Sciatic nerve (tissue), 2 donors: ENCODE measurements at regions of chr1 and their contacts with region 1.

Region 1: DNA sequence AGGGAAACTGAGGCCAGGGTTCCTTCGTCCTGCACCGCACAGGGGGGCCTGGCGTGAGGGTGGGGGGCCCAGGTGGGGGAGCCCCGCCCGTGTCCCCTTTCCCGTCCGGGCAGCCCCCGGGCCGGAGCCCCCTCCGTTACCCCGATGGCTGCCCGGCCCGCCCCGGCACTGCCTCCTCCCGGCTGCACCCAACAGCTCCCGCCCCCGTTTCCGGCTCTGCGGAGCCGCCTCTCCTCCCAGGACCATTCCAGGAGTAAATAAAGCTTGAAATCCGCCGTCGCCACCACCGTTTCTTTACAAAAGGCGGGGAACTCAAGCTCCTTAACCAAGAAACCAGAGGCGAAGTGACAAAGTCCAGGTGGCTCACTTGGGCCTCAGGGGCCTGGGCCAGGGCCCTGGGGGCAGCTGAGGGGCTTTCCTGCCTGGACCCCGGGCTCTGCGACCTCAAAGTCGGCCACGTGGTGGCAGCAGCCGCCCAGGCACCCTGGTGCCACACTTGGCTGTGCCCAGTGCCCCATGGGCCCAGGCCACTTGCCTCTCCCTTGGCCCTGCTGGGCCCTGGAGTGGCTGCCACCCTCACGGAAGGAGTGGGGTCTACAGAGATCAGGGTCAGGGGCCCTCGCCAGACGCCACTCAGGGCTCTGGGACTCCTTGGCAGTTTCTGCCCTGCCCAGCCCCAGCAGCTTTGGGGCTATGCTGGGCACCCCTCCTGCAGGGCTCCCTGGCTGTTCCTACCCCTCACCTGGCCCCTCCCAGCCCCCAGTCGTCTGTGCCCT is 514 bp upstream of the FAAP20 start:
- DNase-seq: peak; percentile 94
- ATAC-seq: peak; percentile 80

Region 2: DNA sequence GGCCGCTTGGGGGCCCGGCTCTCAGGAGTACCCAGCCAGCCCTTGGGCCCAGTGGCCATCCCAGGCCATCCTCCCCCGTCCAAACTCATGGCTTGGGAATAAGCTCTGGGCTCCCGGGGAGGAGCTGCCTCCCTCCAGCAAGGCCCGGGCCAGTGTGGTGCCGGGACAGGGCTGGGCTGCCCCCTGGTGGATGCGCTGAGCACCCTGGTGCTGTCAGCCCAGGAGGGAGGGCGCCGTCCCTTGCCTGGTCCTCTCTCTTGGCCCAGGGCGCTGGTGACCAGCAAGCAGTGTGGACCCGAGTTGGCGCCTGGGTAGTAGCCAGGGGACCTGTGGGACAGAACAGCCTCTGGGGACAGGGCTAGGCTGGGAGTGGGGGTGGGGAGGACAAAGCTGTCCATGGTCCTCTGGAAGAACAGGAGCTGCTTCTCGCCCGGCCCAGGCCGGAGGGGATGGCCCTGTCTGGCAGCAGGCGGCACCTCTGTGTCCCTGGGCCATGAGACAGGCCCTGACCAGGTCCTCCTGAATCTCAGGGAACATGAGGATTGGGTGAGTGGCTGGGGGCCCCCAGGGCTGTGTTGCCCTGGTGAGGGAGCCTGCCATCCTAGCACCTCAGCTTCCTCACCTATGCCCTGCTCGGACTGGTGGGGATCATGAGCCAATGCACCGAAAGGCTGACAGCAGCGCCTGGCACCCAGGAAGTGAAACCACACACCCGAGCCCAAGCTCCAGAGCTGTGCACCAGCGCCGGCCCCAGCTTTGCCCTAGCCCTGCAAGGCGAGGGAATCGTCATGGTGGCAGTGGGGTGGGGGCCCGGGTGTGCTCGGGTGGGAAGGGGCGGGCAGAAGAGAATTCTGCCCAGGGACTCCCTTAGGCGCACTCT is 186.9 kb after region 1 on chr1:
- intact Hi-C with region 1: loop called (anchors 2 kb)
- DNase-seq: peak; percentile 92
- ATAC-seq: peak; percentile 96